IMR-90 (cell line): ENCODE measurements at regions of chr3 and their contacts with region 1.

Region 1: GRCh38 chr3:131033480-131034080 is 6.9 kb downstream of the NEK11 start:
- DNase-seq: peak; percentile 55
- ATAC-seq: peak; percentile 66; the same call in 1 of the 2 replicates
- H3K4me3 ChIP-seq: no peak overlapping the region
- H3K27ac ChIP-seq: no peak overlapping the region
- H3K4me1 ChIP-seq: peaks cover 4% of the 10 kb centered on the region
- H3K27me3 ChIP-seq: no peaks in the 10 kb centered on the region
- CTCF ChIP-seq: peak; percentile 66
- POLR2A ChIP-seq: no peak
- RAD21 ChIP-seq: peak; percentile 69

Region 2: DNA sequence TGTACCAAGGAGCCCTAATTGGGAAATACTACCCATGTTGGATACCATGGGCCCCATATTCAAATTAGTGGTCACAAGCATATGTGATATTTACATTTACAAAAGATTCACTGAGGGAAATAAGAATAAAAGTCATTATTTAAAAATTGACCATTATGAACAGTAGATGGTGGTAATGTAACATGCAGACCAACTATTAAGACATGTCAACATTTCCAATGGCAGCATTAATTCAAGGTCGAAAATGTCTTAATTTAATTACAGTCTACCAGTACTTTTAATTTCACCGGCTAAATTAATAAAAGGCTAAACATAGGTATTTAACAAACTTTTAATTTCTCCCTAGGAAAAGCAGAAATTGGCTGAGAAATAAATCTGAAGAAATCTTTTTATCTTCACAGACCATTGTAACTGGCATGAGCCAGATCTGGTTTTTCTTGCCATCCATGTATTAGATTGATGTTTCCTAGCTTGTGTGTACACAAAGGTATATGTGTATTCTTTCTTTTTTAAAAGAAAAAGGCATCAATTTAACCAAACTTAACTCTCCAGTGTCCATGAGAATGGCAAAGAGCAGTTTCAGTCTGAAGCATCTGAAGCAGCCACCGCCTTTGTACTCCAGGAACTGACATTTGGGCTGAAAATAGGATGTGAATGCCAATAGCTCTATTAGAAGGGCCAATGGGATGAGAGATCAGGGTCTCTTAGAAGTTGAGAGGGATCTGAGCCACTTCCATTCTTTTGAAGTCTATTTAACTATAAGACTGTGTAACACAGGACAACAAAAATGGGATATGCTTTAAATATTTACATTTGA is 19.7 kb after region 1 on chr3:
- CTCF ChIA-PET with region 1: no interaction called
- POLR2A ChIA-PET with region 1: no interaction called
- dilution Hi-C with region 1: no loop called
- in situ Hi-C with region 1: no loop called
- intact Hi-C with region 1: loop called (anchors 1 kb)
- DNase-seq: peak; percentile 1
- ATAC-seq: no peak
- H3K4me3 ChIP-seq: no peak overlapping the region
- H3K27ac ChIP-seq: no peak overlapping the region
- H3K4me1 ChIP-seq: no peaks in the 10 kb centered on the region
- H3K27me3 ChIP-seq: no peaks in the 10 kb centered on the region
- CTCF ChIP-seq: peak; percentile 35; the same call in 1 of the 2 replicates
- POLR2A ChIP-seq: no peak
- RAD21 ChIP-seq: peak; percentile 33; the same call in 1 of the 2 replicates

Region 3: GRCh38 chr3:131221731-131222130 is 188.2 kb after region 1 on chr3:
- CTCF ChIA-PET with region 1: no interaction called
- POLR2A ChIA-PET with region 1: no interaction called
- dilution Hi-C with region 1: no loop called
- in situ Hi-C with region 1: no loop called
- intact Hi-C with region 1: loop called (anchors 10 kb)
- DNase-seq: peak; percentile 71
- ATAC-seq: peak; percentile 53
- H3K4me3 ChIP-seq: no peak overlapping the region
- H3K27ac ChIP-seq: no peak overlapping the region
- H3K4me1 ChIP-seq: 0 out of 2 replicates have a peak, but pooled peaks cover 2% of the 10 kb centered on the region
- H3K27me3 ChIP-seq: no peaks in the 10 kb centered on the region
- CTCF ChIP-seq: no peak
- POLR2A ChIP-seq: no peak
- RAD21 ChIP-seq: no peak

Region 4: DNA sequence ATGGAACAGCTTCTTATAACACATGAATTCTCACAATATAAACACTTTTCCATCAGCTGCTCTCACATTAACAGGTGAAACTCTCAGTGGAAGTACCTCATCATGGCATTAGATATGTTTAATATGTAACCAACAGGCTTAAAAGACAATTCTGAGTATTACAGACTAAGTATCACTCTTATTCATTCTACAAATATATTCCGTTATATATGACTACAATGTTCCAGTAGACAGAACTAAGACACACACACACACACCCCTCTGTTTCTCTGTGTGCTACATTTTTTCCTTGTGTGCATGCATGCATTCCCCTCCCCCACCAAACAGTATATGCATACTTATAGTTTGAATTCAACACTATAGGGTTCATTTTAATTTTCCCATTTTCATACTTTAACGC is 436.8 kb after region 1 on chr3:
- CTCF ChIA-PET with region 1: no interaction called
- POLR2A ChIA-PET with region 1: no interaction called
- dilution Hi-C with region 1: no loop called
- in situ Hi-C with region 1: loop called (anchors 25 kb)
- intact Hi-C with region 1: loop called (anchors 10 kb)
- DNase-seq: no peak
- ATAC-seq: no peak
- H3K4me3 ChIP-seq: no peak overlapping the region
- H3K27ac ChIP-seq: no peak overlapping the region
- H3K4me1 ChIP-seq: no peaks in the 10 kb centered on the region
- H3K27me3 ChIP-seq: no peaks in the 10 kb centered on the region
- CTCF ChIP-seq: no peak
- POLR2A ChIP-seq: no peak
- RAD21 ChIP-seq: no peak

Region 5: GRCh38 chr3:132034486-132035464 is 1001.2 kb after region 1 on chr3 and contains the start of gene CPNE4:
- CTCF ChIA-PET with region 1: interaction called, 4 read pairs
- POLR2A ChIA-PET with region 1: no interaction called
- dilution Hi-C with region 1: no loop called
- in situ Hi-C with region 1: loop called (anchors 25 kb)
- intact Hi-C with region 1: loop called (anchors 1 kb)
- DNase-seq: peak; percentile 51
- ATAC-seq: peak; percentile 99
- H3K4me3 ChIP-seq: no peak within 1 kb of the TSS
- H3K27ac ChIP-seq: no peak within 1 kb of the TSS
- H3K4me1 ChIP-seq: no peaks in the 10 kb centered on the region
- H3K27me3 ChIP-seq: peaks cover 19% of the 10 kb centered on the region
- CTCF ChIP-seq: peak; percentile 84
- POLR2A ChIP-seq: no peak
- RAD21 ChIP-seq: peak; percentile 36; the same call in 1 of the 2 replicates
- total RNA-seq, gene CPNE4: not detected in 2 replicates